ENCODE measurements at regions of chr5 and their contacts with region 1.

Region 1: GRCh38 chr5:137498736-137499505 is at the start of gene SPOCK1:
- DNase-seq: peak; percentile 89
- H3K4me3 Mint-ChIP-seq: no peak within 1 kb of the TSS
- H3K27ac Mint-ChIP-seq: no peak within 1 kb of the TSS
- H3K4me1 Mint-ChIP-seq: no peaks in the 10 kb centered on the region
- H3K27me3 Mint-ChIP-seq: peaks cover 31% of the 10 kb centered on the region
- total RNA-seq, gene SPOCK1: not detected in 2 replicates

Region 2: GRCh38 chr5:137344723-137345322 is 154.1 kb before region 1 on chr5:
- intact Hi-C with region 1: loop called (anchors 1 kb)
- DNase-seq: peak; percentile 72
- H3K4me3 Mint-ChIP-seq: no peak overlapping the region
- H3K27ac Mint-ChIP-seq: no peak overlapping the region
- H3K4me1 Mint-ChIP-seq: no peaks in the 10 kb centered on the region
- H3K27me3 Mint-ChIP-seq: no peaks in the 10 kb centered on the region

Measured in activated CD4-positive, alpha-beta T cell treated with anti-CD3 and anti-CD28 coated beads, Interleukin-2, amount 10 ng/mL, durations not matched to agents 24 days and 14 days (primary cell).